Right ventricle myocardium inferior (tissue), 1 donor: ENCODE measurements at regions of chr14 and their contacts with region 1.

Region 1: GRCh38 chr14:100654814-100655740 is 67.9 kb upstream of the BEGAIN start:
- DNase-seq: peak; percentile 50
- ATAC-seq: no peak

Region 2: GRCh38 chr14:100440187-100440631 is 214.9 kb before region 1 on chr14:
- intact Hi-C with region 1: loop called (anchors 5 kb)
- DNase-seq: peak; percentile 87
- ATAC-seq: peak; percentile 91

Region 3: GRCh38 chr14:100540141-100540925 is 114.7 kb before region 1 on chr14:
- intact Hi-C with region 1: no loop called
- DNase-seq: peak; percentile 28
- ATAC-seq: no peak